Esophagus muscularis mucosa (tissue), 4 donors: ENCODE measurements at regions of chr19 and their contacts with region 1.

Region 1: GRCh38 chr19:52139252-52140031 is at the start of gene ZNF616:
- DNase-seq: peak; percentile 99
- H3K4me3 ChIP-seq: peak within 1 kb of the TSS; percentile 63 to 92 (median 90)
- H3K27ac ChIP-seq: peak within 1 kb of the TSS; percentile 90 to 97 (median 93)
- H3K4me1 ChIP-seq: peaks cover 12 to 26% (median 20%) of the 10 kb centered on the region in 4 donors
- H3K27me3 ChIP-seq: no peaks in the 10 kb centered on the region
- CTCF ChIP-seq: peak; percentile 74 to 86 (median 79)
- EP300 ChIP-seq: no peak
- POLR2A ChIP-seq: peak; percentile 34
- total RNA-seq, gene ZNF616: 3.0 to 6.6 (median 4.3) TPM

Region 2: DNA sequence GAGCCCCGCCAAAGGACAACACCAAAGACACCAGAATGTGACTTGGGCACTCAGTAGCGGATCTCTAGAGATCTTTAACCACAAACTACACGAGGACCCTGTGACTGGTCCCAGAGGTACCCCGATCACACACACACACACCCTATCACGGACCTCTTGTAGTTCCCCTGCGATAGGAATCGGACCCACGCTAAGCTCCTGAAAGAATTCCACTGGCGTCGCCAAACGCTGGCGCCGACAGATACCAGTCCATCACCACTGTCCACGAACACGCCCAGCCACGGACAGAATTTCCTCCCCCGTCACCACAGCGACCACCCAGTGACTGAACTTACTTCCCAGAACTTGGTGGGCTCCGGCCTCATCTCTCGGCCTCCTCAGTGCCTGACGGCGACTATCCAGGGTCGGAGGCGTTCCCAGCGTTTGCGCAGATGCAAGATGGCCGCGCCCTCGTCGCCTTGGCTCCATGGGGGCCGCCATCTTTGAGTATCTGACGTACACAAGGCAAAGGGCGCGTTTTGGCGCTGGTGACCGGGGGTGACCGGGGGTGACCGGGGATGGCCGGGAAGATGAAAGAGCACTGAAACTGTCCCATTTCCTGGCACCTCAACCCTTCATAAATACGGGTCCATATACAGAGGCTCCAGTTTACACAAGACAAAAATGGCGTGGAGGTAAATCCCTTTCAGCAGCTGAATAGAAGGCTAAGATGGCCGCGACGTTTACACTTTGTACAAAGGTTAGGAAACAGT is 131.5 kb before region 1 on chr19 and contains the start of gene ZNF615:
- intact Hi-C with region 1: no loop called
- DNase-seq: peak; percentile 96
- H3K4me3 ChIP-seq: peak within 1 kb of the TSS; percentile 64 to 92 (median 79)
- H3K27ac ChIP-seq: peak within 1 kb of the TSS; percentile 87 to 90 (median 88)
- H3K4me1 ChIP-seq: peaks cover 0 to 16% (median 9%) of the 10 kb centered on the region in 4 donors
- H3K27me3 ChIP-seq: no peaks in the 10 kb centered on the region
- CTCF ChIP-seq: no peak
- EP300 ChIP-seq: no peak
- POLR2A ChIP-seq: peak; percentile 4
- total RNA-seq, gene ZNF615: 13.4 to 17.6 (median 15.2) TPM

Region 3: DNA sequence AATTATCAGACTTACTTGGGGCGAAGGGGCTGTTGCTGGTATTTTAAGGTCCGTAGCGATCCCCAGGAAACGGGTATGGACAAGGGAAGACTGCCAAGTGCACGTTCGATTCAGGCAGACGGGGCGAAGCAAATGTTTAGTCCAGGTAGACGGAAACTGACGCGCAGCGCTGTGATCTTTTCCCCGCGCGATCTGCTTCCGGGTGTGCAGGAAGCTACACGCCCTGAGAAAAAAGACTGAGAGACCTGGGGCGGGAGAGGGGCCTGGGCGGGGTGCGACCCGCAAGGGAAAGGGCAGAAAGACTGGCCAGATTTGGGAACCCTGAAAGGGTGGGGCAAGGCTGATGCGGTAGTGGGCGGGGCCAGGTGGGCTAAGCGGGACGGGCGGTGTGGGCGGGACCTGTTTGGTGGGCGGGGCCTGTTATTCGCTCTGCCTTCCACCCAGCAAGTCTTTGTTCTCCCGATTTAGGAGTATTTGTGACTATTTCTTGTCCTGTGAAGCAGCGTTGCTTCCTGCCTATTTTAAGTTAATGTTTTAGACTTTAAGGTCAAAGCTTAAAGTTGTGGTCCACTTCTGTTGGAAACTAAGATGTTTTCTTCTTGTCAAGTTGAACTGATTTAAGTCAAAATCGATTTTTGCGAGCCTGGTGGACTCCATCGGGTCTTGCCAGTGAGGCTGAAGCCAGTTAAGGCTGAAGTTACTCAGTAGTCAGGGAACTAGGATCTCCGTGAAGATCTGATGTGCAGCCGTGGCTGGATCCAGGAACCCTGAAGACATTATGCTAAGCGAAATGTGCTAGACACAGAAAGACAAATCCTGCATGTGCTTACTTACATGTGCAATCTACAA is 32.1 kb after region 1 on chr19 and contains the start of gene ZNF836:
- intact Hi-C with region 1: loop called (anchors 5 kb)
- DNase-seq: peak; percentile 97
- H3K4me3 ChIP-seq: peak within 1 kb of the TSS; percentile 63 to 87 (median 78)
- H3K27ac ChIP-seq: peak within 1 kb of the TSS; percentile 88 to 90 (median 88)
- H3K4me1 ChIP-seq: peaks cover 11 to 23% (median 20%) of the 10 kb centered on the region in 4 donors
- H3K27me3 ChIP-seq: no peaks in the 10 kb centered on the region
- CTCF ChIP-seq: no peak
- EP300 ChIP-seq: no peak
- POLR2A ChIP-seq: no peak
- total RNA-seq, gene ZNF836: 5.8 to 13.1 (median 9.1) TPM

Region 4: DNA sequence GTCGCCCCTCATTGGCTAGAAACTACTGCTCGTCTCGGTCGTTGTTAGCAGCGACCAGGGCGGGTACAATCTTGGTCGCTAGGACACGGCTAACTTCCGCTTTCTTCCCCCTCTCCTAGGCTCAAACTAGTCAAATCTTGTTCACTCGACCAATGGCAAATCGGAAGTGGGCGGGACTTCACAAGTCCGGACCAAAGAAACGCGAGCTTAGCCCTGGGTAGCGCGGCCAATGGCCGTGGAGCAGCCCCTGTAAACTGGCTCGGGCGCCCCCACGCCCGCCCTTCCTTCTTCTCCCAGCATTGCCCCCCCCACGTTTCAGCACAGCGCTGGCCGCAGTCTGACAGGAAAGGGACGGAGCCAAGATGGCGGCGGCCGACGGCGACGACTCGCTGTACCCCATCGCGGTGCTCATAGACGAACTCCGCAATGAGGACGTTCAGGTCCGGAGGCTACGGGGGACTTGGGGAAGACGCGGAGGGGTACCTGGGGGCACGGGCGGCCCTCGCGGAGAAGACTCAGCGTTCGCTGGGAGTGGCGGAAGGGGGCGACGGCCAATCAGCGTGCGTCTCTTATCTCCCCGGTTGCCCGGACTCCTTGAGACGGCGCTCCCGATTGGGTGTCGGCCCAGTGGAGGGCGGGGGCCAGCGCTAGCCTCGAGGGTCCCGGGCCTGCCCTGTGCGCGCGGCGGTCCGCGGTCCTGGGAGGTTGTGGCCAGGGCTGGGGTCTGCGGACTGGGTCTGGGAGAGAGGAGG is 50.5 kb after region 1 on chr19 and contains the start of gene PPP2R1A:
- intact Hi-C with region 1: loop called (anchors 1 kb)
- DNase-seq: peak; percentile 100
- H3K4me3 ChIP-seq: peak within 1 kb of the TSS; percentile 63 to 86 (median 79)
- H3K27ac ChIP-seq: peak within 1 kb of the TSS; percentile 94 to 97 (median 96)
- H3K4me1 ChIP-seq: peaks cover 47 to 55% (median 52%) of the 10 kb centered on the region in 4 donors
- H3K27me3 ChIP-seq: no peaks in the 10 kb centered on the region
- CTCF ChIP-seq: no peak
- EP300 ChIP-seq: no peak
- POLR2A ChIP-seq: peak; percentile 89
- total RNA-seq, gene PPP2R1A: 192 to 304 (median 221) TPM

Region 5: DNA sequence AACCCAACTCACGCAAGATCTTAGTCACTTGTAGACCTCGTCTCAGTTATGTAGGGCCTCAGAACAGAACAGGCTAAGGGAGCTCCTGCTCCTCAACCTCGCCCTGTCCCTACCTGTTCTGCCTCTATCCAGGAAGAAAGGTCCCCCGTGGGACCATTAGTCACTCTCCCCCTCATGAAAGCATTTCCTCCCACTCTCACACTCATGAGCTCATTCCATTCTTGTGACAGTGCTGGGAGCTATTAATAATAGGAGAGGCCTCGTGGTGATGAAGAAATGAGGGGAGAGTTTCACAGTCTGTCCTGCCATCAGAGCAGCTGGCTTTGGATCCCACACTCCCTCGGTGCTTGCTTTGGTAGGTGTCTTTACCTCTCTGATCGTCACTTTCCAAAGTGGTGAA is 60.6 kb after region 1 on chr19:
- intact Hi-C with region 1: loop called (anchors 2 kb)
- DNase-seq: no peak
- H3K4me3 ChIP-seq: no peak overlapping the region
- H3K27ac ChIP-seq: peak overlapping the region; percentile 65 to 75 (median 70)
- H3K4me1 ChIP-seq: peaks cover 57 to 81% (median 65%) of the 10 kb centered on the region in 4 donors
- H3K27me3 ChIP-seq: no peaks in the 10 kb centered on the region
- CTCF ChIP-seq: no peak
- EP300 ChIP-seq: no peak
- POLR2A ChIP-seq: no peak

Region 6: GRCh38 chr19:52237771-52238400 is 98.4 kb after region 1 on chr19:
- intact Hi-C with region 1: loop called (anchors 2 kb)
- DNase-seq: no peak
- H3K4me3 ChIP-seq: no peak overlapping the region
- H3K27ac ChIP-seq: no peak overlapping the region
- H3K4me1 ChIP-seq: peaks cover 0 to 6% (median 2%) of the 10 kb centered on the region in 4 donors
- H3K27me3 ChIP-seq: no peaks in the 10 kb centered on the region
- CTCF ChIP-seq: peak; percentile 87 to 93 (median 91)
- EP300 ChIP-seq: no peak
- POLR2A ChIP-seq: no peak